Motor neuron (in vitro differentiated cells): ENCODE measurements at regions of chr9 and their contacts with region 1.

Region 1: GRCh38 chr9:73162987-73163768 is 11.5 kb downstream of the ANXA1 start:
- ATAC-seq: peak in 1 of 8 experiments; percentile 6
- H3K4me3 ChIP-seq: no peak overlapping the region
- H3K27ac ChIP-seq: no peak overlapping the region
- H3K4me1 ChIP-seq: no peaks in the 10 kb centered on the region

Region 2: GRCh38 chr9:73104342-73104741 is 58.8 kb before region 1 on chr9:
- in situ Hi-C with region 1: loop called in 1 of 9 experiments (anchors 10 kb)
- ATAC-seq: no peak
- H3K4me3 ChIP-seq: no peak overlapping the region
- H3K27ac ChIP-seq: no peak overlapping the region
- H3K4me1 ChIP-seq: no peaks in the 10 kb centered on the region